Left lung (tissue), 14 donors: ENCODE measurements at regions of chr3 and their contacts with region 1.

Region 1: GRCh38 chr3:159804726-159805410 is 183.8 kb upstream of the IL12A start:
- DNase-seq: peak in 2 of 4 donors; percentile 64 to 78
- ATAC-seq: peak; percentile 94
- H3K4me3 ChIP-seq: no peak overlapping the region
- H3K27ac ChIP-seq: peak overlapping the region in 1 of 2 donors; percentile 0
- H3K4me1 ChIP-seq: peaks cover 13 to 20% of the 10 kb centered on the region in 2 donors
- H3K27me3 ChIP-seq: no peaks in the 10 kb centered on the region
- CTCF ChIP-seq: peak; percentile 75 to 91

Region 2: GRCh38 chr3:159260049-159260662 is 544.7 kb before region 1 on chr3:
- intact Hi-C with region 1: loop called in 1 of 2 experiments (anchors 10 kb)
- DNase-seq: peak in 2 of 4 donors; percentile 39 to 67
- ATAC-seq: peak; percentile 77
- H3K4me3 ChIP-seq: no peak overlapping the region
- H3K27ac ChIP-seq: no peak overlapping the region
- H3K4me1 ChIP-seq: no peaks in the 10 kb centered on the region
- H3K27me3 ChIP-seq: no peaks in the 10 kb centered on the region
- CTCF ChIP-seq: peak; percentile 40 to 59

Region 3: DNA sequence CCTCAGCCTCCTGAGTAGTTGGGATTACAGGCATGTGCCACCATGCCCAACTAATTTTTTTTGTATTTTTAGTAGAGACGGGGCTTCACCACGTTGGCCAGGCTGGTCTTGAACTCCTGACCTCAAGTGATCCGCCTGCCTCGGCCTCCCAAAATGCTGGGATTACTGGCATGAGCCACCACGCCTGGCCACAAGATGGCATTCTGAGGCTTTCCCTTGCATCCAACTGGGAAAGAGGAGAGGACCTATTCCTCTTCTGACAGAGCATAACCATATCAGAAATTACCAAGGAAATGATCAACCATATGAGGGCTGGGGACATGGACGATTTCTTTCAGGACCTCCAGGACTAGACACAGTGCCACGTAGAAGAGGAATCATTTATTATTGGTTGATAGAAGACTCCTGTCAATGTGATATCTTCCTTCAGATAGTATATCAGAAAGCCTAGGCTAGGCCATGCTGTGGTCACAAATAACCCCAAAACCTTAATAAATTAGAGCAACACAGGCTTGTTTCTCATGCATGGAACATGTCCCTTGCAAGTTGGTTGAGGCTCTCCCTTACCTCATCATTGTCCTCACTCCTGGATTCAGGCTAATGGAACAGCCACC is 188.5 kb before region 1 on chr3:
- intact Hi-C with region 1: loop called in 1 of 2 experiments (anchors 5 kb)
- DNase-seq: peak in 1 of 4 donors; percentile 67
- ATAC-seq: peak; percentile 92
- H3K4me3 ChIP-seq: no peak overlapping the region
- H3K27ac ChIP-seq: no peak overlapping the region
- H3K4me1 ChIP-seq: no peaks in the 10 kb centered on the region
- H3K27me3 ChIP-seq: no peaks in the 10 kb centered on the region
- CTCF ChIP-seq: peak in 1 of 2 donors; percentile 58